CD8-positive, alpha-beta T cell (primary cell): ENCODE measurements at regions of chr9 and their contacts with region 1.

Region 1: DNA sequence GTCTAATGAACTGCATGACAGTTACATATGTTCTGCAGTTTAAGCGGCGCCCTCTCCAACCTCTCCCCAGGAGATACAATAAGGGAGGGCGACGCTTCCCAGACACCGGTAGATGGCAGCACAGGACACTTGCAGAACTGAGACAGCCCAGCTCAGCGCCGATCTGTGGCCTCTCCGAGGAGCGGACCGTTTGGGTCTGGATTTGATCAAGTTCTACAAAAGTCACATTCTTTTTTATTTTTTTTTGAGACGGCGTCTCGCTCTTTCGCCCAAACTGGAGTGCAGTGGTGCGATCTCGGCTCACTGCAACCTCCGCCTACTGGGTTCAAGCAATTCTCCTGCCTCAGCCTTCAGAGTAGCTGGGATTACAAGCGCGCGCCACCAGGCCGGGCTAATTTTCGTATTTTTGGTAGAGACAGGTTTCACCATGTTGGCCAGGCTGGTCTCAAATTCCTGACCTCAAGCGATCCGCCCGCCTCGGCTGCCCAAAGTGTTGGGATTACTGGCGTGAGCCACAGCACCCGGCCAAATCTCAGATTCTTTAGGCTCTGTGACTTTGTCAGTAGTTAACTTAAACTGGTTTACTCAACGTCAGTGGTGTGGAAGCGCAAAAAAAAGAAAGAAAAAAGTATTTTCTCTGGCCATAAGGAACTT is 1.4 kb upstream of the ATOSB start:
- DNase-seq: peak; percentile 78 to 96 (median 88)
- ATAC-seq: peak; percentile 65
- H3K4me3 ChIP-seq: peak overlapping the region; percentile 64 to 69
- H3K4me3 Mint-ChIP-seq: peak overlapping the region; percentile 94
- H3K27ac ChIP-seq: peak overlapping the region; percentile 64 to 91
- H3K27ac Mint-ChIP-seq: peak overlapping the region; percentile 94
- H3K4me1 ChIP-seq: peaks cover 34% of the 10 kb centered on the region
- H3K4me1 Mint-ChIP-seq: peaks cover 42% of the 10 kb centered on the region
- H3K27me3 ChIP-seq: peaks cover 0 to 2% of the 10 kb centered on the region in 2 experiments
- H3K27me3 Mint-ChIP-seq: peaks cover 2% of the 10 kb centered on the region
- CTCF ChIP-seq: peak; percentile 95

Region 2: GRCh38 chr9:34989003-34989945 is 127.8 kb before region 1 on chr9 and contains the start of gene DNAJB5:
- CTCF ChIA-PET with region 1: no interaction called
- POLR2A ChIA-PET with region 1: no interaction called
- intact Hi-C with region 1: loop called in 1 of 2 experiments (anchors 1 kb)
- DNase-seq: peak; percentile 94 to 99 (median 96)
- ATAC-seq: peak; percentile 89
- H3K4me3 ChIP-seq: peak within 1 kb of the TSS; percentile 88 to 95
- H3K4me3 Mint-ChIP-seq: peak within 1 kb of the TSS; percentile 93
- H3K27ac ChIP-seq: peak within 1 kb of the TSS; percentile 42 to 77
- H3K27ac Mint-ChIP-seq: peak within 1 kb of the TSS; percentile 76
- H3K4me1 ChIP-seq: peaks cover 42% of the 10 kb centered on the region
- H3K4me1 Mint-ChIP-seq: peaks cover 46% of the 10 kb centered on the region
- H3K27me3 ChIP-seq: no peaks in the 10 kb centered on the region
- H3K27me3 Mint-ChIP-seq: no peaks in the 10 kb centered on the region
- CTCF ChIP-seq: no peak
- total RNA-seq, gene DNAJB5: 2.1 to 2.2 TPM

Region 3: GRCh38 chr9:35102926-35103659 is 13.9 kb before region 1 on chr9 and contains the start of gene STOML2:
- CTCF ChIA-PET with region 1: interaction called, 15 read pairs
- POLR2A ChIA-PET with region 1: interaction called, 23 read pairs
- intact Hi-C with region 1: loop called in 1 of 2 experiments (anchors 1 kb)
- DNase-seq: peak; percentile 83 to 97 (median 93)
- ATAC-seq: peak; percentile 96
- H3K4me3 ChIP-seq: peak within 1 kb of the TSS; percentile 78 to 95
- H3K4me3 Mint-ChIP-seq: peak within 1 kb of the TSS; percentile 89
- H3K27ac ChIP-seq: peak within 1 kb of the TSS; percentile 79 to 92
- H3K27ac Mint-ChIP-seq: peak within 1 kb of the TSS; percentile 90
- H3K4me1 ChIP-seq: peaks cover 14% of the 10 kb centered on the region
- H3K4me1 Mint-ChIP-seq: peaks cover 27% of the 10 kb centered on the region
- H3K27me3 ChIP-seq: no peaks in the 10 kb centered on the region
- H3K27me3 Mint-ChIP-seq: no peaks in the 10 kb centered on the region
- CTCF ChIP-seq: no peak
- total RNA-seq, gene STOML2: 30.5 to 31.3 TPM

Region 4: GRCh38 chr9:35414889-35415288 is 297.9 kb after region 1 on chr9:
- CTCF ChIA-PET with region 1: no interaction called
- POLR2A ChIA-PET with region 1: no interaction called
- intact Hi-C with region 1: loop called in 1 of 2 experiments (anchors 5 kb)
- DNase-seq: no peak
- ATAC-seq: no peak
- H3K4me3 ChIP-seq: no peak overlapping the region
- H3K4me3 Mint-ChIP-seq: no peak overlapping the region
- H3K27ac ChIP-seq: no peak overlapping the region
- H3K27ac Mint-ChIP-seq: no peak overlapping the region
- H3K4me1 ChIP-seq: no peaks in the 10 kb centered on the region
- H3K4me1 Mint-ChIP-seq: no peaks in the 10 kb centered on the region
- H3K27me3 ChIP-seq: no peaks in the 10 kb centered on the region
- H3K27me3 Mint-ChIP-seq: peaks cover 47% of the 10 kb centered on the region
- CTCF ChIP-seq: no peak

Region 5: DNA sequence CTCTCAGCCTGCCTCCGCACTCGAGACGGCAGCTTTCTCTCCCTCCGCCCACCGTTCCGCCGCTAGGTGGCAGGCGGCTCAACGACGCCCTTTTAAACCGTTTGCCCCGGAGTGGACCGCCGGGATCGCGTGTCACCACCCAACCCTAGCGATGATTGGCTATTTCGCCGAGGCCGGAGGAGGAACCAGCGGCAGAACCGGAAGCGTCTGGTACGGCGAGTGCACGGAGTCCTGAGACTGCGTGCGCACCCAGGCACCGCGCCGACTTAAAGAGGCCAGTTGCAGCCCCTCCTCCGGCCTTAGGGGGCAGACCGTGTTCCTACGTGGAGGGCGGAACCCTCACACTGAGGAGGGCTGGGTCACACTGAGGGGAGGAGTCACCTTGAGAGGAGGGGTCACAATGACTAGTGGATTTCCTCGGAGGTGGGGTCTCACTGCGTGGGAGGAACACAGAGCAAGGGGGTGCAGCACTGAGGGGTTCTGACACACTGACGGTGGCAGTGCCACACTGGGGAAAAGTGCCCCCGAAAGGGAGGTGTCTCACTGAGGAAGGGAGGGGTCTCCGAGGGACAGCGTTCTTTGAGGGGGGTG is 487.1 kb after region 1 on chr9:
- CTCF ChIA-PET with region 1: no interaction called
- POLR2A ChIA-PET with region 1: no interaction called
- intact Hi-C with region 1: loop called (anchors 1 kb)
- DNase-seq: peak; percentile 98 to 100 (median 99)
- ATAC-seq: peak; percentile 91
- H3K4me3 ChIP-seq: peak overlapping the region; percentile 61 to 83
- H3K4me3 Mint-ChIP-seq: peak overlapping the region; percentile 93
- H3K27ac ChIP-seq: peak overlapping the region; percentile 61 to 83
- H3K27ac Mint-ChIP-seq: peak overlapping the region; percentile 93
- H3K4me1 ChIP-seq: peaks cover 23% of the 10 kb centered on the region
- H3K4me1 Mint-ChIP-seq: peaks cover 31% of the 10 kb centered on the region
- H3K27me3 ChIP-seq: no peaks in the 10 kb centered on the region
- H3K27me3 Mint-ChIP-seq: no peaks in the 10 kb centered on the region
- CTCF ChIP-seq: peak; percentile 92

Region 6: GRCh38 chr9:35829084-35829763 is 712.2 kb after region 1 on chr9 and contains the start of gene TMEM8B:
- CTCF ChIA-PET with region 1: no interaction called
- POLR2A ChIA-PET with region 1: no interaction called
- intact Hi-C with region 1: loop called in 1 of 2 experiments (anchors 5 kb)
- DNase-seq: peak; percentile 88 to 96 (median 94)
- ATAC-seq: peak; percentile 93
- H3K4me3 ChIP-seq: peak within 1 kb of the TSS; percentile 67 to 89
- H3K4me3 Mint-ChIP-seq: peak within 1 kb of the TSS; percentile 95
- H3K27ac ChIP-seq: peak within 1 kb of the TSS; percentile 64 to 71
- H3K27ac Mint-ChIP-seq: peak within 1 kb of the TSS; percentile 91
- H3K4me1 ChIP-seq: peaks cover 13% of the 10 kb centered on the region
- H3K4me1 Mint-ChIP-seq: peaks cover 41% of the 10 kb centered on the region
- H3K27me3 ChIP-seq: no peaks in the 10 kb centered on the region
- H3K27me3 Mint-ChIP-seq: no peaks in the 10 kb centered on the region
- CTCF ChIP-seq: no peak
- total RNA-seq, gene TMEM8B: 6.4 to 7.2 TPM